ENCODE measurements at regions of chr10 and their contacts with region 1.

Region 1: DNA sequence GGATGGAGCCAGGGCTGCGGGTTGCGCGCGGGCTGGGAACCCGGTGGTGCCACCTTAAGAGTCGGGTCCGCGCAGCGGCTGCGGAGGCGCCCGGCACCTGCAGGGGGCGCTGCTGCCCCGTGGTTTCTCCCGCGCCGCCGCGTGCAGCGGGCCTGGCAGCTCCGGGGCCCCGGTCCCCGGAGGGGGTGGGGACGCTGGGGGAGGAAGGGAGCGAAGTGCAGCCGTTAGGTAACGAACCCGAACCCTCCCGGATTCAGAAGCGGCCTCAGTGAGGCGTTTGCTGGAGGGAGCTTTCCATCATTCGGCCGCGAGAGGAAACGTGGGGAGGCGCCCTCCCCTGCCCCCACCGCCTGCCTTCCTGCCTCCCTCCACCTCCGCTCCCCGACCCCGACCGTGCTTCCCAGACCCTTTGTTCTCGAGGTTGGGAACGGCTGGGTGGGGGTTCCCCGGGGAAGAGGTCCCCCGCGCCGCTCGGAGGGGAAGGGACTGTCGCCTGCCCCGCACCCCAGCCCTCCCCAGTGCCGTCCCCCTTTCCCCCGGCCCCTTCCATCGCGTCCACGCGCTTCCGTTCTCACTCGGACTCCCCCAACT is 29.6 kb downstream of the SKIDA1 start:
- DNase-seq: peak; percentile 87
- ATAC-seq: peak; percentile 82
- H3K4me3 Mint-ChIP-seq: peak overlapping the region; percentile 74
- H3K27ac Mint-ChIP-seq: no peak overlapping the region
- H3K4me1 Mint-ChIP-seq: peaks cover 24% of the 10 kb centered on the region
- H3K27me3 Mint-ChIP-seq: peaks cover 78% of the 10 kb centered on the region

Region 2: DNA sequence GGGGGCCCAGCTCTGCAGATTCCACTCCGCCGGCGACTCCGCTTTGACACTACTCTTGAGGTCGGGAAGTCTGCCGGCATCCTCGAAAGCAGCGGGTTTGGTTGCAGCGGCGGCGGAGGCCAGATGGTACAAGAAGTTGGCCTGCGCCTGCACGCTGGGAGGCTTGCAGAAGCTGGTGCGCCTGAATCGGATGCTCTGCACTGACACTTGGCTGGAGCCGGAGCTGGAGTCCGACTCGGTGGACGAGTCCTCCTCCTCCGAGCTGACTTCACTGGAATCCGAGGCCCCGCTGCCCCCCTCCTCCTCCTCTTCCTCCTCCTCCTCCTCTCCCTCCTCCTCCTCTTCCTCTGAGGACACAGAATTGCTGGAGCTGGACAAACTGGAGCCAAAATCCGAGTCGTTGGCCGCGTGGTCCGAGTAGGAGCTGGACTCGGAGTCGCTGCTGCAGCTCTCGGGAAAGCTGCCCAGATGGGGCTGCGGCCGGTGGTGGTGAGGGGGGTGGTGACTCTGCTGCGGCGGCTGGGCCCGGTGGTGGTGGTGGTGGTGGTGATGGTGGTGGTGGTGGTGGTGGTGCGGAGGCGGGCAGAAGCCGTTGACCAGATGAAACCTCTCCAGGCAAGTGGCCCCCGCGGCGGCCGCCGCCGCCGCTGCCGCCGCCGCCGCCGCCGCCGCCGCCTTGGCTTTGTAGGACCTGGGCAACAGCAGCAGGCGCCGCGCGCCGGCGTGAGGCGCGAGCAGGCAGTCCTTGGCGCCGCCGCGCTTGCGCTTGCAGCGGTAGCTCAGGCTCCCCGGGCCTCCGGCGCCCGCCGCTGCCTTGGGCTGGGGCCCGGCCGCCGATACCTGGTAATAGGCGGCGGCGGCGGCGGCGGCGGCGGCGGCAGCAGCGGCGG is 20.6 kb after region 1 on chr10:
- CTCF ChIA-PET with region 1: interaction called, 33 read pairs
- DNase-seq: peak; percentile 56
- ATAC-seq: peak; percentile 69
- H3K4me3 Mint-ChIP-seq: peak overlapping the region; percentile 78
- H3K27ac Mint-ChIP-seq: no peak overlapping the region
- H3K4me1 Mint-ChIP-seq: peaks cover 37% of the 10 kb centered on the region
- H3K27me3 Mint-ChIP-seq: peaks cover 86% of the 10 kb centered on the region

Region 3: GRCh38 chr10:21556527-21556926 is 60.7 kb after region 1 on chr10:
- CTCF ChIA-PET with region 1: no interaction called
- DNase-seq: no peak
- ATAC-seq: no peak
- H3K4me3 Mint-ChIP-seq: no peak overlapping the region
- H3K27ac Mint-ChIP-seq: no peak overlapping the region
- H3K4me1 Mint-ChIP-seq: peaks cover 2% of the 10 kb centered on the region
- H3K27me3 Mint-ChIP-seq: no peaks in the 10 kb centered on the region

Region 4: GRCh38 chr10:21732067-21732772 is 236.4 kb after region 1 on chr10:
- CTCF ChIA-PET with region 1: interaction called, 19 read pairs
- DNase-seq: peak; percentile 67
- ATAC-seq: peak; percentile 73
- H3K4me3 Mint-ChIP-seq: no peak overlapping the region
- H3K27ac Mint-ChIP-seq: no peak overlapping the region
- H3K4me1 Mint-ChIP-seq: peaks cover 17% of the 10 kb centered on the region
- H3K27me3 Mint-ChIP-seq: no peaks in the 10 kb centered on the region

Region 5: DNA sequence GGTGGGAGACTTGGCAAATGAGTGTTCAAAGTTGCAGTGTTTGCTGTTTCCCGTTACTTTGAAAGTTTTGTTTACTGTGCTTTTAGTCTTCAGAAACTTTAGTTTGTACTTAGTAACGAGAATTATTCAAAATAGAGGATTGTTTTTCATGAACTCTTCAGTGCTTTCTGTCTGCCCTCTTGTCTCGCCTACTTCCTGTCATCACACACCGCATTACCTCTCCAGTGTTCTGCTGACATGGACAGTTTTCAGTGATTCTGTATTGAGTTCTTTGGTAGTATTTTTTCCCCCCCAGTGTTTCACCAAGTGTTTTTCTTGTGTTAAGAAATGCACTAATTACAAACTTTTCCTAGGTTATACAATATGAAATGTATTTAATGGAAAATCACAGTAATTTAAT is 245.1 kb after region 1 on chr10:
- CTCF ChIA-PET with region 1: interaction called, 10 read pairs
- DNase-seq: no peak
- ATAC-seq: peak; percentile 68
- H3K4me3 Mint-ChIP-seq: no peak overlapping the region
- H3K27ac Mint-ChIP-seq: peak overlapping the region; percentile 71
- H3K4me1 Mint-ChIP-seq: peaks cover 25% of the 10 kb centered on the region
- H3K27me3 Mint-ChIP-seq: no peaks in the 10 kb centered on the region

Region 6: DNA sequence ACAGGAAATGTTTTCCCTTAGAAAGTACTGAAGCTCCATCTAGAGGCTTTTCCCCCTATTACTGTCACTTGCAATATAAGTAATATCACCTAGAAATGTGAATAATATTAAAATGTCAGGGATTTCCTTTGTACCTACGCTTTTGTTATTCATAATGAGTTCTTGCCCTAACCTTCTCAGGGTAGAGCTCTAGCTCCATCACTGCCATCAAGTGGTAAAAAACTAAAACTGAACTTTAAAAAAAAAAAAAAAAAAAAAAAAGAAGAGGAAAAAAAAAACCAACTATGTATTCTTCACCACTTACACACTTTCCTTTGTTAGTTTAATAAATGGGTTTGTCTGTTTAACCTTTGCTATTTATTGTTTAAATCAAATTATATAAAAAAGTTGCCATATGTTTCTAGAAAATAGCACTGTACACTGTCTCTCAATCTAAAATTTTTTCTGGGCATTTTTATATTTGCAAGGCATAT is 457.8 kb after region 1 on chr10:
- CTCF ChIA-PET with region 1: interaction called, 27 read pairs
- DNase-seq: no peak
- ATAC-seq: peak; percentile 53
- H3K4me3 Mint-ChIP-seq: no peak overlapping the region
- H3K27ac Mint-ChIP-seq: no peak overlapping the region
- H3K4me1 Mint-ChIP-seq: peaks cover 2% of the 10 kb centered on the region
- H3K27me3 Mint-ChIP-seq: no peaks in the 10 kb centered on the region

Region 7: GRCh38 chr10:21993360-21994001 is 497.6 kb after region 1 on chr10:
- CTCF ChIA-PET with region 1: interaction called, 13 read pairs
- DNase-seq: no peak
- ATAC-seq: no peak
- H3K4me3 Mint-ChIP-seq: no peak overlapping the region
- H3K27ac Mint-ChIP-seq: no peak overlapping the region
- H3K4me1 Mint-ChIP-seq: peaks cover 11% of the 10 kb centered on the region
- H3K27me3 Mint-ChIP-seq: no peaks in the 10 kb centered on the region